Vagina (tissue), 2 donors: ENCODE measurements at regions of chr4 and their contacts with region 1.

Region 1: GRCh38 chr4:170026253-170027021 is at the start of gene MFAP3L:
- DNase-seq: no peak
- H3K4me3 ChIP-seq: peak within 1 kb of the TSS; percentile 71 to 74
- H3K27ac ChIP-seq: peak within 1 kb of the TSS; percentile 82
- H3K4me1 ChIP-seq: peaks cover 4% of the 10 kb centered on the region
- H3K27me3 ChIP-seq: no peaks in the 10 kb centered on the region
- CTCF ChIP-seq: no peak
- POLR2A ChIP-seq: peak in 1 of 2 donors; percentile 53
- total RNA-seq, gene MFAP3L: 2.2 TPM

Region 2: DNA sequence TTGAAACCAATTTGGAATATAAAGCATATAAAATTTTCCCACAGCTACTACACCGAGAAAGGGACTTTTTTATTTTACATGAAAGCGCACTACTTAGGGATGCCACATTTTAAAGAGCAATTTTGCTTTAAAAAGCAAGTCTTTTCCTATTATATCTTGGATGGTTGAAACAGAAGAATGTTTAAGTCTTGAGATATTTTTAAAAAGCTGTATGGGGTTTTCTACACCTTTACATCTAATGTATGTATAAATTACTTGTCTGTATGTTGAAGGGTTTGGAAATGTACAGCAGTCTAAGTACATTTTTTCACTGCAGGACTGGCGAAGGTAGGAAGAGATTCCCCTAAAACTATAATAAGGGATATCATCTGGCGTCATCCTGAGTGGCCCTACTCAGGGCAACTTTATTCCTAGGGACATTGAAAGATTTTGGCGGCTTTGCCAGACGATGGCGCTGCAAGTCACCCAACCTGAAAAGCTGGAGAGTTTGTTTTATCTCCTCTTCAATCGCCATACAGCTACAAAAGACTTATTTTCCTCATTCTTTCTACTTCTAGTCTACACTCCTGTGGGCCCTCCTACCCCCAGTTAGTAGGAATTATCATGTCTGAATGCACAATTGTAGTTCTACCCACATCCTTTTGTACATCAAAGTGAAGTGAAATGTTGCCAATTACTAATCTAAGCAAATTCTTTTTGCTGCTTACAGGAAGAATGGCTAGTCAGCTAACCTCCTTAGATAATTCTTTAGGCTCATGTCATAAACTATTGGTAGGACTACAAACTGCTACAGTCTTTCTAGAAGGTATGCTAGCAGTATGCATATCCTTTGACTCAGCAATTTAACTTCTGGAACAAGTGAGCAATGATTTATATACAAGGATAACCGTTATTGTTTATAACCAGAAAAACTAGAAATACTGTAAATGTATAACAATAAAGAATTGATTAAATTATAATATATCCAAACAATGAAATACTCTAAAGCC is 413.3 kb before region 1 on chr4:
- intact Hi-C with region 1: loop called (anchors 5 kb)
- DNase-seq: no peak
- H3K4me3 ChIP-seq: peak overlapping the region; percentile 91 to 92
- H3K27ac ChIP-seq: peak overlapping the region; percentile 98
- H3K4me1 ChIP-seq: peaks cover 11% of the 10 kb centered on the region
- H3K27me3 ChIP-seq: no peaks in the 10 kb centered on the region
- CTCF ChIP-seq: peak in 2 of 3 experiments; percentile 51 to 59
- POLR2A ChIP-seq: no peak